Endothelial cell of umbilical vein (primary cell): ENCODE measurements at regions of chr11 and their contacts with region 1.

Region 1: GRCh38 chr11:32312865-32313403 is 122.4 kb downstream of the WT1 start:
- DNase-seq: peak; percentile 51
- H3K4me3 ChIP-seq: no peak overlapping the region
- H3K27ac ChIP-seq: no peak overlapping the region
- H3K4me1 ChIP-seq: no peaks in the 10 kb centered on the region
- H3K27me3 ChIP-seq: no peaks in the 10 kb centered on the region
- CTCF ChIP-seq: peak; percentile 50 to 64
- POLR2A ChIP-seq: no peak

Region 2: DNA sequence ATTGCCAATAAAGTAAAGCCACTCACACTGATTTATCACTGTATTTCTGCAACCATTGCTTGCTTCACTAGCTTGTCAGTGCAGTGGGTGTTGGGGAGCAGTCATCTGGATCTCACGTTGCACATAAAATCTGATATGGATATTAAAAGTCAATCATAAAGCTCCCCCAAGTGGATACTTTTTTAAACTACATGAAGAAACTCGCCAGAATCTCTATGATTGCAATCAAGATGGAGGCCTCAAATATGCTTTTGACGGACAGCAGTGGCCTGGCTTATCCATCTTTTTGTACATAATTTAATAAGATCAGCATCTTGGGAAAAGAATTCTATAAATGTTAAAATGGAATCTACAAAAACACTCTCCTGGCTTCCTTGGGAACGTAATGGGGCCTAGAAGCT is 15.3 kb before region 1 on chr11:
- CTCF ChIA-PET with region 1: interaction called, 28 read pairs
- POLR2A ChIA-PET with region 1: no interaction called
- dilution Hi-C with region 1: no loop called
- intact Hi-C with region 1: no loop called
- DNase-seq: peak; percentile 20
- H3K4me3 ChIP-seq: no peak overlapping the region
- H3K27ac ChIP-seq: no peak overlapping the region
- H3K4me1 ChIP-seq: no peaks in the 10 kb centered on the region
- H3K27me3 ChIP-seq: no peaks in the 10 kb centered on the region
- CTCF ChIP-seq: no peak
- POLR2A ChIP-seq: no peak

Region 3: GRCh38 chr11:32323814-32324130 is 10.8 kb after region 1 on chr11:
- CTCF ChIA-PET with region 1: interaction called, 31 read pairs
- POLR2A ChIA-PET with region 1: no interaction called
- dilution Hi-C with region 1: no loop called
- intact Hi-C with region 1: no loop called
- DNase-seq: no peak
- H3K4me3 ChIP-seq: no peak overlapping the region
- H3K27ac ChIP-seq: no peak overlapping the region
- H3K4me1 ChIP-seq: no peaks in the 10 kb centered on the region
- H3K27me3 ChIP-seq: peaks cover 0 to 5% of the 10 kb centered on the region in 2 experiments
- CTCF ChIP-seq: no peak
- POLR2A ChIP-seq: no peak

Region 4: DNA sequence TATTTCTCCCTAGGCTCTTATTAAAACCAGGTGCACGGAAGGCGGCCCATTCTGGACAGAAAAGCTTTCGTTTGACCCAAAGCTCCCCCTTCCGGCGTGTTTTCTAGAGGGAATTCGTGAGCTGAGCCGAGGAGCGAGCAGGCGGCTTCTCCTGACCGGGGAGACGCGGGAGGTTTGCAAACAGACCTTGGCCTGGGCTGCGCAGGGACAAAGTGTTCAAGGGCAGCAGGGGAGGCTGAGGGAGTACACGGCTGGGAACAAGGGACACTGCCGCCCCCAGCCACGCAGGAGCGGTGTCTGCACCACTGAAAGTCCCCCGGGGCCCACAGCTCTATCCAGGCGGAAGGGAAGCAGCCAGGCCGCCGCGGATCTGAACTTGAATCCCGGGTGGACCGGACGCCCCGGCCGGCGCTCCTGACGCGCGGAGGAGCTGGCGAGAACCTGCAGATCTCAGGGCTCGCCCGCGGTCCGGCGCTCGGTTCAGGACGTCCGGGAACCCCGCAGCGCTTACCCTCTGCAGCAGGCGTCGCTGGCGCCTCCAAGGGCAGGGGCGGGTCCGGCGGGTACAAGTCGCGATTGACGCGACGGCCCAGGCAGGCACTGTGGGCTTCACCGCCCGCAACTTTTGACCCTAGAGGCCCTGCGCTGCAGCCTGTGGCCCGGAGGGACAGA is 20.5 kb after region 1 on chr11:
- CTCF ChIA-PET with region 1: interaction called, 14 read pairs
- POLR2A ChIA-PET with region 1: no interaction called
- dilution Hi-C with region 1: no loop called
- intact Hi-C with region 1: no loop called
- DNase-seq: peak; percentile 28
- H3K4me3 ChIP-seq: peak overlapping the region in 2 of 3 experiments; percentile 2 to 21
- H3K27ac ChIP-seq: no peak overlapping the region
- H3K4me1 ChIP-seq: no peaks in the 10 kb centered on the region
- H3K27me3 ChIP-seq: peaks cover 0 to 8% of the 10 kb centered on the region in 2 experiments
- CTCF ChIP-seq: peak in 1 of 2 donors; percentile 20
- POLR2A ChIP-seq: no peak

Region 5: DNA sequence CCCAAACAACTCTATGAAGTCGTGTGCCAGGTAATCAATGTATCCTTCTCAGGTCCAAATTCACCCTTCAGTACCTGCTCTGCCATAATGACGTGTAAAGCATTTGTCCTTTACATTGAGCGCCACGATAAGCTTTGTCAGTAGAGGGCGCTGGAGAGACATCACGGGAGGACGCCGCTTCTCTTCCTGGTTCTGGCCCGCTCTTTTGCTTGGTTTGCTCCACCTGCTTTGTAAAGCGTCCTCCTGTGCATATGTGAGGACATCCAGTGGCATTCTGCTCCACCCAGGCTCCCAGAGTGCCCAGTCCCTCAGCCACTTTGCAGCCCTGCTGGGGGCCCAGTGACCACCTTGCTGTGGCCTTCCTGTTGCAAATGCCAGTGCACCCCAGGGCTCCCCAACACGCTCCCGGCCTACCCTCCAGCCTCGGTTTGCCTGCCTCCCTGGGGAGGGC is 61.4 kb after region 1 on chr11:
- CTCF ChIA-PET with region 1: no interaction called
- POLR2A ChIA-PET with region 1: no interaction called
- dilution Hi-C with region 1: no loop called
- intact Hi-C with region 1: no loop called
- DNase-seq: peak; percentile 35
- H3K4me3 ChIP-seq: no peak overlapping the region
- H3K27ac ChIP-seq: no peak overlapping the region
- H3K4me1 ChIP-seq: no peaks in the 10 kb centered on the region
- H3K27me3 ChIP-seq: no peaks in the 10 kb centered on the region
- CTCF ChIP-seq: peak; percentile 62 to 63
- POLR2A ChIP-seq: no peak